ENCODE measurements at regions of chr17 and their contacts with region 1.

Region 1: GRCh38 chr17:48791128-48792032 is 25.6 kb downstream of the TTLL6 start:
- DNase-seq: peak; percentile 95
- H3K4me3 Mint-ChIP-seq: no peak overlapping the region
- H3K27ac Mint-ChIP-seq: peak overlapping the region; percentile 57
- H3K4me1 Mint-ChIP-seq: peaks cover 41% of the 10 kb centered on the region
- H3K27me3 Mint-ChIP-seq: peaks cover 25% of the 10 kb centered on the region
- CTCF ChIP-seq: peak; percentile 82

Region 2: DNA sequence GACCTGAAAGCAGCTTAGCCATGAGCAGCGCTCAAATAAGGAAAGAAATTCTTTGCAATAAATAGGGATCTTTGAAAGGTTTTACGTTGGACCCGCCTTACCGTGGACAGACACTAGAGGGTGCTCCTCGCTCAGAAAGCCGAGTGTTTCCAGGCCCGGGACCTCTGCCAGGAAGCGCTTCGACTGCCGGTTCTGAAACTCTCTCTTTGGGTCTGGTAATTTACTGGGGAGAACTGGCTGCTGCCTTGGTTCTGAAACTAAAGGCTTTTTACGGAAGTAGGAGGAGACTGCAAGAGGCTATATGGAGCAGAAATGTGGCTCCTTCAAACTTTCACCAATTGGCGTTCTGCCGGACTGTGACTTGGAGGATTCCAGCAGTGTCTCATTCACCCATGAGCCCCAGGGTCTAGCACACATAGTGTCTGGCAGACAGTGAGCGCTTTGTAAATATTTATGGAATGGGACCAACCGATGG is 119.6 kb before region 1 on chr17:
- CTCF ChIA-PET with region 1: interaction called, 12 read pairs
- intact Hi-C with region 1: no loop called
- DNase-seq: peak; percentile 86
- H3K4me3 Mint-ChIP-seq: peak overlapping the region; percentile 36
- H3K27ac Mint-ChIP-seq: no peak overlapping the region
- H3K4me1 Mint-ChIP-seq: no peaks in the 10 kb centered on the region
- H3K27me3 Mint-ChIP-seq: no peaks in the 10 kb centered on the region
- CTCF ChIP-seq: peak; percentile 95

Region 3: DNA sequence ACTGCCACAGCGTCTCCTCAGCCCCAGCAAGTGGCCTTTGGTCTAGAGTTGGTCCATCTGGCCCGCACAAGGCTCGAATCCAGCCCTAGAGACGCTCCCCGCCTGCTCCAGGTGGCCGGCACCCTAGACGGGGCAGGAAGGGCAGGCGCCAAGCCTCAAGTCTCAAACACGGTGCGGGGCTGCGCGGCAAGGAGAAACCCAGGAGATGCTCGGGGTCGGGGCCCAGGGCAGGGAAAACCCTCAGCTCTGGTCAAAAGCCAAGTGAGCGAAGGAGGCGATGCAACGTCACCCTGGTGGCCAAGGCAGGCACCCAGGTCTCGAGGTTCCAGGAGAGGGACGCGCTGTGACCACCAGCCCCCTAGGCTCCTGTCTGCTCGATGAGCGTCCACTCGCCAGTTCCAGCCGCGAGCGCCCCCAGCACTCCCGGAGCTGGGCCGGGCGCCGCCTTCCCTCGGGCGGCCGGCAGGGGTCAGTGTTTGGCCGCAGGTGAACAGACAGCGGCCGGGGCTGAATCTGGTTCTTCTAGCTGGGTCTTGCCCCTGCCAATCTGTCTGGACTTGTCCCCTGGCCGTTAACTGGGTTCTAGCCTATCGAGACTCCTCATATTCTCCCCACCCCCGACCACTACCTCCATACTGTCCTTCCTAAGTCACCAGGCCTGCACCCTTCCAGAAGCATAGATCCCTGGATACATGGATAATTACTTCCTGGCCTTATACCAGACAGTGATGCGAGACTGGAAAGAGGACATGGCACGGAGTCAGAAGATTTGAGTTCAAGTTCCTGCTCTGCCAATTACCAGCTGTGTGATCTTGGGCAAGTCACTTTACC is 113.0 kb before region 1 on chr17:
- CTCF ChIA-PET with region 1: interaction called, 55 read pairs
- intact Hi-C with region 1: loop called (anchors 2 kb)
- DNase-seq: peak; percentile 92
- H3K4me3 Mint-ChIP-seq: peak overlapping the region; percentile 10
- H3K27ac Mint-ChIP-seq: no peak overlapping the region
- H3K4me1 Mint-ChIP-seq: no peaks in the 10 kb centered on the region
- H3K27me3 Mint-ChIP-seq: no peaks in the 10 kb centered on the region
- CTCF ChIP-seq: peak; percentile 99

Region 4: DNA sequence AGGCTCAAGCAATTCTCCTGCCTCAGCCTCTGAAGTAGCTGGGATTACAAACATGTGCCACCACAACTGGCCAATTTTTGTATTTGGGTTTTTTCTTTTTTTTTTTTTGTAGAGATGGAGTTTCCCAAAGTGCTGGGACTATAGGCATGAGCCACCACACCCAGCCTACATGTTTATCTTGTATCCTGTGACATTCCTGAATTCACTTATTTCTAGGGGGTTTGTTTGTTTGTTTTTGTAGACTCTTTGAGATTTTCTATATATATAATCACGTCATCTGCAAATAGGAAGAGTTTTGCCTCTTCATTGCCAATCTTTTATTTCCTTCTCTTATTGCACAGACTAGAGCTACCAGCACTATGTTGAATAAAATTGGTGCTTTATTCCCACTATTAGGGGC is 98.2 kb before region 1 on chr17:
- CTCF ChIA-PET with region 1: interaction called, 10 read pairs
- intact Hi-C with region 1: no loop called
- DNase-seq: no peak
- H3K4me3 Mint-ChIP-seq: no peak overlapping the region
- H3K27ac Mint-ChIP-seq: no peak overlapping the region
- H3K4me1 Mint-ChIP-seq: no peaks in the 10 kb centered on the region
- H3K27me3 Mint-ChIP-seq: peaks cover 13% of the 10 kb centered on the region
- CTCF ChIP-seq: no peak

Region 5: GRCh38 chr17:48944519-48945260 is 153.3 kb after region 1 on chr17 and contains the start of gene SNF8:
- CTCF ChIA-PET with region 1: no interaction called
- intact Hi-C with region 1: no loop called
- DNase-seq: peak; percentile 98
- H3K4me3 Mint-ChIP-seq: peak within 1 kb of the TSS; percentile 93
- H3K27ac Mint-ChIP-seq: peak within 1 kb of the TSS; percentile 89
- H3K4me1 Mint-ChIP-seq: no peaks in the 10 kb centered on the region
- H3K27me3 Mint-ChIP-seq: no peaks in the 10 kb centered on the region
- CTCF ChIP-seq: no peak
- total RNA-seq, gene SNF8: 198 and 213 TPM in 2 replicates

Measured in Calu3 (cell line).